ENCODE measurements at regions of chr22 and their contacts with region 1.

Region 1: DNA sequence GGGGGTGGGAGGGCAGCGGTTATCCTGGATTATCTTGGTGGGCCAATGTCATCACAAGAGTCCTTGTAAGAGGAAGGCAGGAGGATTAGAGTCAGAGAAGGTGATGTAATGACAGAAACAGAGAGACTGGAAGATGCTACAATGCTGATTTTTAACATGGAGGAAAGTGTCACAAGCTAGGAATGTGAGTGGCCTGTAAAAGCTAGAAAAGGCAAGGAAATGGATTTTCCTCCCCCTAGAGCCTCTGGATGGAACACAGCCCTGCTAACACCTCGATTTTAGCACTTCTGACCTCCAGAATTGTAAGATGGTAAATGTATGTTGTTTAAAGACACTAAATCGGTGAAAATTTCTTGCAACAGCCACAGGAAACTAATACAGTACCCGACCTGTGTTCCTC is 109.3 kb downstream of the MN1 start:
- DNase-seq: no peak
- ATAC-seq: no peak
- H3K4me3 ChIP-seq: no peak overlapping the region
- H3K27ac ChIP-seq: no peak overlapping the region
- H3K4me1 ChIP-seq: peaks cover under 1 to 2% of the 10 kb centered on the region in 2 experiments; a peak in 3 of 4 replicates
- H3K27me3 ChIP-seq: no peaks in the 10 kb centered on the region
- CTCF ChIP-seq: no peak
- POLR2A ChIP-seq: no peak
- RAD21 ChIP-seq: no peak

Region 2: DNA sequence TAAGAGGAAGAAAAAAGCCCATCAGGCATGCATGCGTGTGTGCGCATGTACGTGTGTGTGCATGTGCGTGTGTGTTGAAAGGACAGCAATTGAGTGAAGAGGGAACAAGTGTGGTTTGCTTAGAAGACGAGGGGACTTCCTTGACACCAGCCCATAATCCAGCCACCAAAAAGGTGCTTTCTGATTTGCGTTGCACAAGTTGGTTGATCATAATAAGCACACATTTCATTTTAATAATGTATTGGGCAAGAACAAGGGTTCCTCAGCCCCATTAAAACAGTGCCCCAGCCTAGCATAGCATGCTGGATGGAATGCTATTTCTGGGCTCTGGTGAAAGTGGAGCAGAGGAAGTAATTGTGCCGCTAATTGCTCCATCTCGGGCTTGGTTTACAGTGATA is 541.7 kb before region 1 on chr22:
- CTCF ChIA-PET with region 1: no interaction called
- POLR2A ChIA-PET with region 1: no interaction called
- RAD21 ChIA-PET with region 1: no interaction called
- intact Hi-C with region 1: no loop called
- DNase-seq: no peak
- ATAC-seq: no peak
- H3K4me3 ChIP-seq: no peak overlapping the region
- H3K27ac ChIP-seq: no peak overlapping the region
- H3K4me1 ChIP-seq: no peaks in the 10 kb centered on the region
- H3K27me3 ChIP-seq: peaks cover 3% of the 10 kb centered on the region; the same call in 1 of the 2 replicates
- CTCF ChIP-seq: no peak
- POLR2A ChIP-seq: no peak
- RAD21 ChIP-seq: no peak

Region 3: GRCh38 chr22:27597703-27598444 is 94.4 kb before region 1 on chr22:
- CTCF ChIA-PET with region 1: no interaction called
- POLR2A ChIA-PET with region 1: no interaction called
- RAD21 ChIA-PET with region 1: no interaction called
- intact Hi-C with region 1: no loop called
- DNase-seq: peak; percentile 22
- ATAC-seq: peak; percentile 79
- H3K4me3 ChIP-seq: no peak overlapping the region
- H3K27ac ChIP-seq: no peak overlapping the region
- H3K4me1 ChIP-seq: peaks cover 0 to 6% of the 10 kb centered on the region in 2 experiments; a peak in 1 of 4 replicates
- H3K27me3 ChIP-seq: no peaks in the 10 kb centered on the region
- CTCF ChIP-seq: no peak
- POLR2A ChIP-seq: no peak
- RAD21 ChIP-seq: no peak

Region 4: DNA sequence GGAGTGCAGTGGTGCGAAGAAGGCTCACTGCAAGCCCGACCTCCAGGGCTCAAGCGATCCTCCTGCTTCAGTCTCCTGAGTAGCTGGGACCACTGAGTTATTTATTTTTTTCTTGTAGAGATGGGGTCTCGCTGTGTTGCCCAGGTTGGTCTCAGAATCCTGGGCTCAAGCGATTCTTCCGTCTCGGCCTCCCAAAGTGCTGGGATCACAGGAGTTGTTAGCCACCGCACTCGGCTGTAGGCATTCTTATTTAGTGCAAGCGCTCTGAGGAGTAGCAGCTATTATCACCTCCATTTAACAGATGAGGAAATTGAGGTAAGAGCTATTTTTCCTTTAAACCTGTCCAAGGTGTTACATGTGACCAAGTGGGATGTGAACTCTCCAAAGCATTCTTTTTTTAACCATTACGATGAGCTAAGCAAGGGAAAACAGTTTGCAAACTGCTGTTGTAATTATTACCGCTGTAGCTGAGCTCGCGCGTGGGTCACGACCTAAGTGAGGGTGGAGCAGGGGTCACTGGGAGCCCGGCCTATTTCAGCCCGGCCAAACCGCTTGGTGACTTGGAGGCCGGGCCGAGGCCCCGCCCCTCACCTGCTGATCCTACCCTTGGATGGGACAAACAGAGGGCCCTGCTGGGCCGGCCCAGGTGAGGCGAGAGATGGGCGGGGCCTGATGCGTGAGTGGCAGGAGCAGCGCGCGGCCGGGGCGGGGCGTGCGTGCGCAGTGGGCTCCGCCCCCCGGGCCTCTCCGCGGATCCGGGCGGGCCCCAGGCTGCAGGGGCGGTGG is 1380.1 kb after region 1 on chr22:
- CTCF ChIA-PET with region 1: no interaction called
- POLR2A ChIA-PET with region 1: no interaction called
- RAD21 ChIA-PET with region 1: no interaction called
- intact Hi-C with region 1: loop called (anchors 10 kb)
- DNase-seq: peak; percentile 89
- ATAC-seq: peak; percentile 94
- H3K4me3 ChIP-seq: peak overlapping the region; percentile 17 to 74; a peak in 1 of 4 replicates
- H3K27ac ChIP-seq: no peak overlapping the region
- H3K4me1 ChIP-seq: peaks cover 13 to 33% of the 10 kb centered on the region in 2 experiments
- H3K27me3 ChIP-seq: no peaks in the 10 kb centered on the region
- CTCF ChIP-seq: no peak
- POLR2A ChIP-seq: peak; percentile 24
- RAD21 ChIP-seq: no peak